Left cardiac atrium (tissue), 4 donors: ENCODE measurements at regions of chr9 and their contacts with region 1.

Region 1: GRCh38 chr9:92634712-92635605 is 35.0 kb downstream of the IPPK start:
- DNase-seq: peak; percentile 78
- ATAC-seq: peak; percentile 88 to 94

Region 2: DNA sequence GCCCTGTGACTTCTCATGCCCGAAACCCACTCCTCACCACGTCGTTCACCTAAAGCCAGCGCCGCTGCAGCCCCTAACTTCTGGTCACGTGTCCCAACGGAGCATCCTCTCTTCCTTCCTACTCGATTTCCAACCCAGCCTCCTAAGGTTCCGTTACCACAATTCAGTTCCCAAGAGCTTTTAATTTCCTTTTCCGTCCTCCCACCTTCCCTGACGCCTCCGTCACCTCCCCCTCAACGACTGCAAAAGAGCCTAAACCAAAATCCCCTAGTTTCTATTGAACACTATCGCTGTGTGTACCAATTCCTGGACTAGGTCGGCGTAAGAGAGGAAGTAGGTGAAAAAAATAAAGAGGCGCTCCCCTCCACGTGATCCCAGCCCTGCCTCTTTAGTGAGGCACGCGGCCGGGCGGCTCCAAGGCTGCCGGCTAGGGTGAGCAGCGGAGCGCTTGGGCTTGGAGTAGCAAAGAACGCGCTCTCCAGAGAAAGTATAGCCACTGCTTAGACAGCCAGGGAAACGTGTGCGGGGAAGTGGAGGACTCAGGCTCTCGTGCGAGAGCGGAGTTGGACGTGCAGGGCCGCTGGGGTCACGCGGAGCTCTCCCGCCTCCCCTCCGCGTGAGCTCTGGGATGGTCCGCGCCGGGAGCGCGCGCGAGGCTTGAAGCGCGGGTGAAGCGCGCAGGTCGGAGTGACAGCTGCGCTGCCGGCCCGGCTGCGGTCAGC is 309.5 kb before region 1 on chr9 and contains the starts of genes CENPP and NOL8:
- intact Hi-C with region 1: loop called in 1 of 2 experiments (anchors 10 kb)
- DNase-seq: peak; percentile 90
- ATAC-seq: peak; percentile 99
- total RNA-seq, gene CENPP: 1.9 to 3.2 TPM
- total RNA-seq, gene NOL8: 13.3 to 17.6 TPM

Region 3: DNA sequence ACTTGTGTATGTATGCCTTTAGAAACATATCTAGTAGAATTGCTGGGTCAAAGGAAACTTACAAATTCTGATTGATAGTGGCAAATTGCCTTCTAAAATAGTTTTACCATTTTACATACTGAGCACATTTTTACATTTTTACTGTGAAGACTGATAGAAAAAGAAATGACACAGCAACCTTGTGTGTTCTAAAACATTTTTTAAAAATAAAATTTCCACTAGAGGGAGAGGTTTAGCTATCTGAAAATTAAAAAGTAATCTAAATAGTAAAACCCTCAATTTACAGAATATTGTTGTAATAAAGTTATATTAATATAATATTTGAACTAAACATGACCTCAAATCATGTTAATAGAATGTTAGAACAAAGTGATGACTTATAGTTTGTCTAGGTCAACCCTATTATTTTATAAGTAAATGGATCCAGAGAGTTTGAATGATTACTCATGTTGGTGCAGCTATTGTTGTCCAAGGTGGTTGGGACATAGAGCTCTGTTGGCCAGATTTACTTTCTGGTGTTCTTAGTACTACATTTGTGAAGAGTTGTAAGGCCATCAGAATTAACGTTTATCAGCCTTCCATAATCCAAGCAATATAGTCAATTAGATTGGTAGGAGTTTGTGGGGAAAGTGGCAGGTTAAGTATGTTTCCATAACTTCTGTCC is 292.0 kb before region 1 on chr9:
- intact Hi-C with region 1: loop called in 1 of 2 experiments (anchors 10 kb)
- DNase-seq: no peak
- ATAC-seq: no peak

Region 4: DNA sequence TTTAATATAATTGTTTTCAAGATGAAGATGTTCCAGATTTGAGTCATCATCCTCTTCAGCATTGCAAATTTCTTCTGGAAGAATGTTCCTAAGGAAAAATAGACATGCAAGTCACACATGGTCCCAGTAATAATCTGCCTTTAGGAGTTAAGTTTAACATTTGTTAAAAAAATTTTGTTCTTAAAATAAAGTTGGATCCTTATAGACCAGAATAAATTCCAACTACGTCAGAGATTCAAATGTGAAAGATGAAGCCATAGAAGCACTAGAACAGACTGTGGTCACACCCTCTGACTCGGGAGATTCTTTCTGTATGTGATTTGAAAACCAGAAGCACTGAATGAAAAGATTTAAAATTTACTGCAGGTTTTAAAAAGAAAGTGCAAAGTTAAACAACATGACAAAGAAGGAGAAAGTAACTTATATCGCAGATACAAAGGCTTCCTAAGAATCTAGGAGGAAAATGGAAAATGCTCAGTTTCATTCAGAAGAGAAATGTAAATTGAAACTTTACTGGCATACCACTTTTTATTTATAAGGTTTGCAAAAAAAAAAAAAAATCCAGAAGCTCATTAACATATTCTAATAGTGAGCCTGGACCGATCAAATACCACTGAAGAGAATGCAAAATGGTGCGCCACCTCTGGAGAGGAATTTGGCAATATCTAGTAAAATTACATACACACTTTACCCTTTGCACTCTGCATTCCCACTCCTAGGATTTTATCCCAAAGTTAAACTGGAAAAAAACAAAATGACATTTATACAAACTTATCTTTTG is 138.4 kb before region 1 on chr9:
- intact Hi-C with region 1: no loop called
- DNase-seq: no peak
- ATAC-seq: no peak

Region 5: GRCh38 chr9:92525306-92525705 is 109.7 kb before region 1 on chr9:
- intact Hi-C with region 1: no loop called
- DNase-seq: no peak
- ATAC-seq: no peak

Region 6: GRCh38 chr9:92696619-92697018 is 61.7 kb after region 1 on chr9:
- intact Hi-C with region 1: no loop called
- DNase-seq: no peak
- ATAC-seq: no peak